CD4-positive, alpha-beta memory T cell (primary cell): ENCODE measurements at regions of chr2 and their contacts with region 1.

Region 1: DNA sequence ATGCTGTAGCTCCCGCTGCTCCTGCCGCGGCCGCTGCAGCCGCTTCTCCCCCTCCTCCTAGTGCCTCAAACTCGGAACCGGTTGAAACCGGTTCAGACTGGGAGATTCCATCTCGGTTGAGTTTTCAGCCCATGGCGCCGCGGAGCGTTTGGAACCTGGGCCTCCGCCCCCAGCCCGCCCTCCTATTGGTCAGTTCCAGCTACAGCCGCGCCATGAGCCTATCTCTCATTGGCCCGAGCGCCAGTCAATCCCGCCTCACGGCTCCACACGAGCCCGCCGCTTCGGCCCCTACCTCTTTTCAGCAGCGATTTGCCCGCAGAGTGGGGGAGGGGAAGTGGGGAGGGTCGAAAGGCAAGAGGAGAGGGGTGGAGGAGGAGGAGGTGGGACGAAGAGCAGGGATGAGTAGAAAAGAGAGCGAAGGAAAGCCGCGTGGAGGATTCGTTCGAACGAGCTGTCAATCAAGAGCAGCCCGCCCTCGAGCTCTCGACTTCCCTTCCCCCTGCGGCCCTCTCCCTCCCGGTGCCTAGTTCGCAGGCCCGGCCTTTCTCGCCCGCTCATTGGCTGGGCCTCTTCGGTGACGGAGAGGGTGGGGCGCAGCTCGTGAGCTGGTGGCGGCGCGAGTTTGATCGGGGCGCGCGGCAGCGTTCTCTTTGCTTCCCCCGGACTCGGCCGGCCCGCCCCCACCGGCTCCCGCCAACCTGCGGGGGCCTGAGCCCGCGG is at the start of gene XPO1:
- DNase-seq: peak; percentile 99
- H3K4me3 ChIP-seq: peak within 1 kb of the TSS; percentile 78 to 94
- H3K4me3 Mint-ChIP-seq: peak within 1 kb of the TSS; percentile 92 to 100 (median 98)
- H3K27ac ChIP-seq: peak within 1 kb of the TSS; percentile 96
- H3K27ac Mint-ChIP-seq: peak within 1 kb of the TSS; percentile 99 to 100 (median 100)
- H3K4me1 ChIP-seq: peaks cover 36% of the 10 kb centered on the region
- H3K4me1 Mint-ChIP-seq: peaks cover 23 to 50% (median 29%) of the 10 kb centered on the region in 4 donors
- H3K27me3 ChIP-seq: no peaks in the 10 kb centered on the region
- H3K27me3 Mint-ChIP-seq: peaks cover 0 to 2% of the 10 kb centered on the region in 2 donors
- total RNA-seq, gene XPO1: 174 to 180 TPM

Region 2: GRCh38 chr2:61176755-61177726 is 361.3 kb before region 1 on chr2:
- CTCF ChIA-PET with region 1: no interaction called
- POLR2A ChIA-PET with region 1: interaction called, 36 read pairs
- intact Hi-C with region 1: loop called (anchors 1 kb)
- DNase-seq: peak; percentile 89 to 94 (median 93)
- H3K4me3 ChIP-seq: peak overlapping the region; percentile 74 to 100
- H3K4me3 Mint-ChIP-seq: peak overlapping the region; percentile 91 to 95 (median 93)
- H3K27ac ChIP-seq: peak overlapping the region; percentile 93
- H3K27ac Mint-ChIP-seq: peak overlapping the region; percentile 88 to 96 (median 94)
- H3K4me1 ChIP-seq: peaks cover 47% of the 10 kb centered on the region
- H3K4me1 Mint-ChIP-seq: peaks cover 39 to 56% (median 45%) of the 10 kb centered on the region in 4 donors
- H3K27me3 ChIP-seq: no peaks in the 10 kb centered on the region
- H3K27me3 Mint-ChIP-seq: no peaks in the 10 kb centered on the region

Region 3: GRCh38 chr2:61470965-61471904 is 67.1 kb before region 1 on chr2 and contains the start of gene USP34:
- CTCF ChIA-PET with region 1: interaction called, 3 read pairs
- POLR2A ChIA-PET with region 1: interaction called, 38 read pairs
- intact Hi-C with region 1: loop called (anchors 1 kb)
- DNase-seq: peak; percentile 89 to 95 (median 92)
- H3K4me3 ChIP-seq: peak within 1 kb of the TSS; percentile 68 to 89
- H3K4me3 Mint-ChIP-seq: peak within 1 kb of the TSS; percentile 92 to 98 (median 95)
- H3K27ac ChIP-seq: peak within 1 kb of the TSS; percentile 98
- H3K27ac Mint-ChIP-seq: peak within 1 kb of the TSS; percentile 93 to 100 (median 99)
- H3K4me1 ChIP-seq: peaks cover 41% of the 10 kb centered on the region
- H3K4me1 Mint-ChIP-seq: peaks cover 12 to 46% (median 29%) of the 10 kb centered on the region in 4 donors
- H3K27me3 ChIP-seq: no peaks in the 10 kb centered on the region
- H3K27me3 Mint-ChIP-seq: no peaks in the 10 kb centered on the region
- total RNA-seq, gene USP34: 163 to 164 TPM

Region 4: GRCh38 chr2:61520261-61520660 is 18.1 kb before region 1 on chr2:
- CTCF ChIA-PET with region 1: no interaction called
- POLR2A ChIA-PET with region 1: interaction called, 27 read pairs
- intact Hi-C with region 1: loop called (anchors 2 kb)
- DNase-seq: no peak
- H3K4me3 ChIP-seq: no peak overlapping the region
- H3K4me3 Mint-ChIP-seq: no peak overlapping the region
- H3K27ac ChIP-seq: no peak overlapping the region
- H3K27ac Mint-ChIP-seq: peak overlapping the region in 1 of 7 donors; percentile 66
- H3K4me1 ChIP-seq: peaks cover 24% of the 10 kb centered on the region
- H3K4me1 Mint-ChIP-seq: peaks cover 20 to 33% (median 25%) of the 10 kb centered on the region in 4 donors
- H3K27me3 ChIP-seq: no peaks in the 10 kb centered on the region
- H3K27me3 Mint-ChIP-seq: no peaks in the 10 kb centered on the region

Region 5: DNA sequence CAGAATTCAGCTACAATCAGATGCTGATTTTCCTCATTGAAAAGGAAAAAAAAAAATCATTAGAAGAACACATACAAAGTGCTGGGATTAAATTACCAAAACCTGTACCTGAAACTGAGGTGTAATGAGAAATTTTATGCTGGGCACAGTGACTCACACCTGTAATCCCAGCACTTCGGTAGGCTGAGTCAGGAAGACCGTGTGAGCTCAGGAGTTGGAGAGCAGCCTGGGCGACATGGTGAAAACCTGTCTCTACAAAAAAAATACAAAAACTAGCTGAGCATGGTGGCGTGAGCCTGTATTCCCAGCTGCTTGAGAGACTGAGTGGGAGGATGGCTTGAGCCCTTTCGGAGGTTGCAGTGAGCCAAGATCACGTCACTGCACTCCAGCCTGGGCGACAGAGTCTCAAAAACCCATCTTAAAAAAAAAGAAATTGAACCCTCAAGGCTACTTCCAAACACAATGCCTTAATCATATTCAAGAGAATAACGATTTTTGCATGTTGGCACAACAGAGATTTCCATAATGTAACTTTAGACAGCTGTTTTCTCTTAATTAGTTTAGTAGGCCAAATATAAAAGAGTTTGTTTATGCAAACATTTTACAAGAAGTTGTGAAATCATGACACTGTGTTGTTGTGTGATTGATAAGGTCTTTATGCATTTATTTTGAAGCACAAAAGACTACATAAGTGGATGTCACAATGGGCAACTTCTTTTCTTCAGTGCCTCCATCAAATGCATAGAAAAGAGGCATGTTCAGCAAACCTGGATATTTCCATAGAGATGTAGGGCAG is 251.6 kb after region 1 on chr2:
- CTCF ChIA-PET with region 1: no interaction called
- POLR2A ChIA-PET with region 1: no interaction called
- intact Hi-C with region 1: loop called (anchors 10 kb)
- DNase-seq: no peak
- H3K4me3 ChIP-seq: no peak overlapping the region
- H3K4me3 Mint-ChIP-seq: no peak overlapping the region
- H3K27ac ChIP-seq: no peak overlapping the region
- H3K27ac Mint-ChIP-seq: no peak overlapping the region
- H3K4me1 ChIP-seq: no peaks in the 10 kb centered on the region
- H3K4me1 Mint-ChIP-seq: peaks cover 3 to 6% (median 5%) of the 10 kb centered on the region in 4 donors
- H3K27me3 ChIP-seq: no peaks in the 10 kb centered on the region
- H3K27me3 Mint-ChIP-seq: peaks cover 2% of the 10 kb centered on the region in 2 donors

Region 6: GRCh38 chr2:62195421-62196277 is 657.3 kb after region 1 on chr2 and contains the start of gene B3GNT2:
- CTCF ChIA-PET with region 1: no interaction called
- POLR2A ChIA-PET with region 1: no interaction called
- intact Hi-C with region 1: loop called (anchors 5 kb)
- DNase-seq: peak; percentile 79 to 84 (median 80)
- H3K4me3 ChIP-seq: peak within 1 kb of the TSS; percentile 84 to 86
- H3K4me3 Mint-ChIP-seq: peak within 1 kb of the TSS; percentile 84 to 92 (median 90)
- H3K27ac ChIP-seq: peak within 1 kb of the TSS; percentile 80
- H3K27ac Mint-ChIP-seq: peak within 1 kb of the TSS; percentile 72 to 95 (median 87)
- H3K4me1 ChIP-seq: peaks cover 41% of the 10 kb centered on the region
- H3K4me1 Mint-ChIP-seq: peaks cover 27 to 35% (median 30%) of the 10 kb centered on the region in 4 donors
- H3K27me3 ChIP-seq: no peaks in the 10 kb centered on the region
- H3K27me3 Mint-ChIP-seq: no peaks in the 10 kb centered on the region
- total RNA-seq, gene B3GNT2: 18.3 to 18.8 TPM